ENCODE measurements at regions of chr20 and their contacts with region 1.

Region 1: GRCh38 chr20:23874747-23875146 is 4.8 kb downstream of the CST5 start:
- DNase-seq: peak; percentile 44
- ATAC-seq: peak; percentile 61
- H3K4me3 Mint-ChIP-seq: no peak overlapping the region
- H3K27ac Mint-ChIP-seq: peak overlapping the region; percentile 83
- H3K4me1 Mint-ChIP-seq: peaks cover 54% of the 10 kb centered on the region
- H3K27me3 Mint-ChIP-seq: peaks cover 2% of the 10 kb centered on the region

Region 2: GRCh38 chr20:23800878-23801277 is 73.9 kb before region 1 on chr20:
- CTCF ChIA-PET with region 1: no interaction called
- POLR2A ChIA-PET with region 1: no interaction called
- intact Hi-C with region 1: loop called (anchors 5 to 10 kb)
- DNase-seq: no peak
- ATAC-seq: no peak
- H3K4me3 Mint-ChIP-seq: no peak overlapping the region
- H3K27ac Mint-ChIP-seq: no peak overlapping the region
- H3K4me1 Mint-ChIP-seq: no peaks in the 10 kb centered on the region
- H3K27me3 Mint-ChIP-seq: peaks cover 3% of the 10 kb centered on the region

Region 3: GRCh38 chr20:23917024-23917725 is 42.4 kb after region 1 on chr20:
- CTCF ChIA-PET with region 1: no interaction called
- POLR2A ChIA-PET with region 1: interaction called, 3 read pairs
- intact Hi-C with region 1: loop called (anchors 1 to 5 kb)
- DNase-seq: no peak
- ATAC-seq: no peak
- H3K4me3 Mint-ChIP-seq: no peak overlapping the region
- H3K27ac Mint-ChIP-seq: no peak overlapping the region
- H3K4me1 Mint-ChIP-seq: peaks cover 45% of the 10 kb centered on the region
- H3K27me3 Mint-ChIP-seq: no peaks in the 10 kb centered on the region